ENCODE measurements at regions of chr1 and their contacts with region 1.

Region 1: GRCh38 chr1:61950418-61950817 is 208.1 kb downstream of the PATJ start:
- DNase-seq: no peak

Region 2: GRCh38 chr1:61865646-61866231 is 84.7 kb before region 1 on chr1:
- intact Hi-C with region 1: loop called (anchors 5 kb)
- DNase-seq: no peak